Activated CD4-positive, alpha-beta T cell treated with anti-CD3 and anti-CD28 coated beads, Interleukin-2, amount 10 ng/mL, durations not matched to agents 24 days and 14 days (primary cell): ENCODE measurements at regions of chr12 and their contacts with region 1.

Region 1: GRCh38 chr12:4148418-4149056 is 125.0 kb upstream of the CCND2 start:
- DNase-seq: no peak
- H3K4me3 Mint-ChIP-seq: no peak overlapping the region
- H3K27ac Mint-ChIP-seq: peak overlapping the region; percentile 80
- H3K4me1 Mint-ChIP-seq: peaks cover 89% of the 10 kb centered on the region
- H3K27me3 Mint-ChIP-seq: no peaks in the 10 kb centered on the region

Region 2: DNA sequence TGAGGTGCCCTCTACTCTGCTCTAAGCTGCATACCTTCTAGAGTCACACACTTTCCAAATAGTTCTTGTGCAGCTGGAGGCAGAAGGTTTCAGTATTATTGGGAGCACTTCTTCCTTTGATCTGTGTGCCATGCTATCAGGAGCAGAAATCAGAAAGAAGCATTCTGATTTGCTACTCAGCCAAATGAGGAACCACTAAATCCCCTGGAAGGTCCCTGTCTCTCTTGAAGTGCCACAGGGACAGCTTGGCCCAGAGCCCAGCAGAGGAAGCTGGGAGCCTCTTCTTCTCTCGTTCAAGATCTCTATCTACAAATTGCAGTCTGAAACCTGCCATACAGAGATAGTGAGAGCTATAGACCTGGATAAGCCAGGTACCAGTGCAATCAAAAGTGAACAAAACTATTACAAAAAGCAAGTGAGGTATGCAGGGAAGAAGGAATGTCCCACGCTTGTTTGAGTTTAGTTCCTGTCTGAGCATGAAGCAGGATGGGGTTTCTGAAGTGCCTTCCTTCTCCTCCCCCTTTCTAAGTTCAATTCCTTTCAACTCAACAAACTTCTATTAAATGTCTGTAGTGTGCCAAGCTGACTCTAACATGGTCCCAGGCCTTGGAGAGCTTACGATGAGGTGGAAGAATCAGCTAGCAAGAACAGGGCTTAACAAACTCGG is 174.4 kb before region 1 on chr12:
- intact Hi-C with region 1: loop called (anchors 10 kb)
- DNase-seq: peak; percentile 68
- H3K4me3 Mint-ChIP-seq: peak overlapping the region; percentile 68
- H3K27ac Mint-ChIP-seq: peak overlapping the region; percentile 84
- H3K4me1 Mint-ChIP-seq: peaks cover 49% of the 10 kb centered on the region
- H3K27me3 Mint-ChIP-seq: no peaks in the 10 kb centered on the region

Region 3: DNA sequence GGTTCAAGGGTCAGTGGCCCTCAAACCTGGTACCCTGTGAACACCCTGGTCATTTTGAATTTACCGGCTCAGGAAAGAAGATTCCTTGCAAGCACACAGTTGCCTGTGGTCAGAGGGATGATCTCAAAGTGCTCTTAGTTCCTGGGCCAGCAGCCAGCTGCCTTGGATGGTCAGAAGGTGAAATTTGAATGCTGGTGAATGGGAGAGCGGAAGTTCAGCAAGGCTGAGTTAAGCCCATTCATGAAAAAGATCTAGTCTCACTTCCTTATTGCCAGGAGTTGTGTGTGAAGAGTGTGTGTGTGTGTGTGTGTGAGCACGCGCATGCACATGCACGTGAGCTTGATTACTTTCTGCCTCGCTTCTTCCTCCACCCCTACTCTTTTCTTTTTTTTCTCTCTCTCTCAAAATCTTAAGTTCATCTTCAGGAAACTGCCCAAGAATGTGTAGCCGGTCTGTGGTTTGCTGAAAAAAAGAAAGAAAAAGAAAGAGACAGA is 30.5 kb before region 1 on chr12:
- intact Hi-C with region 1: loop called (anchors 1 kb)
- DNase-seq: no peak
- H3K4me3 Mint-ChIP-seq: peak overlapping the region; percentile 73
- H3K27ac Mint-ChIP-seq: peak overlapping the region; percentile 89
- H3K4me1 Mint-ChIP-seq: peaks cover 60% of the 10 kb centered on the region
- H3K27me3 Mint-ChIP-seq: no peaks in the 10 kb centered on the region

Region 4: DNA sequence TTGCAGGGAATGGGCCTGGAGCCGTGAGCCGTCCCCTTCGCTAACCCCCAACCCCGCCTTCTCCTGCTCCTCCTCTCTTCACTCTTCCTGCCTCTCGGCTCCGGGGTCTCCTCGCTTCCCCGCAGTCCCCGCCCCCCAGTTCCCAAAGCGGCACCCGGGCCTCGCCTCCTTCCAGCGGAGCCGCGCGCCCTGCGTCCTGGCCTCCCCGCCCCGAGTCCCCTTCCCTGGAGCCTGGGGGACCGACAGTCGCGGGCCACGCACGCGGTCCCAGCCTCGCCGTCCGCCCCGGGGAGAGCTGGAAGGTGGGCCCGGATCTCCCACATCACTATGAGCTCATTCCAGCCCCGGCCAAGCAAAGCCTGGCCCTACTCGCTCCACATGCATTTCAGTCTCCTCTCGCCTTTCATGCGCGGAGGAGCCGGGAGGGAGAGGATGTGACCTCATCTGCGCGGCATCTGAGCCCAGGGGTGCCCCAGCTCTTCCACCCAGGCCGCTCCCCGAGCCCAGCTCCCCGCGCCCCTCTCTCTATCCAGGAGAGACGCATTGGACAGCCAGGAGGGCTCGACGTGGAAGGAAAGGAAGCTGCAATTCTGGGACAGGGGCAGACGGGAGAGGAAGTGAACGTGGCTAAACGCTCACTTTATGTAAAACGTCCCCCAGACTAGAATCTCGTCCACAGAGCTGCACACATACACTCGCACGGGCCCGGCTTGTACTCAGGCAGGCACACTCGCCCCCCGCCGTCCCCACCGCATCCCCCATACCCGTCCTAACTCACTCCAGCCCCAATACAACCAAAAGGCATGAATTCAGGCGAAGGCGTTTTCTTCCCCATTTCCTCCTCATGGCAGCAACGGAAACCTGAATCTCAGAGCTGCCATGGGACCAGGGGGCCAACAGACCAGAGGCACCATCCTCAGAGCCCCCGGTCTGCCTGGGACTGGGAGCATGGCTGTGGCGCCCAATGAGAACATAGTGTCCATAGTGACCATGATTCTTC is 16.3 kb after region 1 on chr12:
- intact Hi-C with region 1: loop called (anchors 1 kb)
- DNase-seq: peak; percentile 91
- H3K4me3 Mint-ChIP-seq: peak overlapping the region; percentile 84
- H3K27ac Mint-ChIP-seq: peak overlapping the region; percentile 95
- H3K4me1 Mint-ChIP-seq: peaks cover 49% of the 10 kb centered on the region
- H3K27me3 Mint-ChIP-seq: no peaks in the 10 kb centered on the region

Region 5: GRCh38 chr12:4269279-4269991 is 120.9 kb after region 1 on chr12:
- intact Hi-C with region 1: loop called (anchors 1 kb)
- DNase-seq: peak; percentile 98
- H3K4me3 Mint-ChIP-seq: peak overlapping the region; percentile 97
- H3K27ac Mint-ChIP-seq: peak overlapping the region; percentile 97
- H3K4me1 Mint-ChIP-seq: peaks cover 24% of the 10 kb centered on the region
- H3K27me3 Mint-ChIP-seq: peaks cover 16% of the 10 kb centered on the region